Activated CD4-positive, alpha-beta memory T cell treated with anti-CD3 and anti-CD28 coated beads, Interleukin-2, amount 10 ng/mL, durations not matched to agents 7 days and 5 days (primary cell): ENCODE measurements at regions of chr2 and their contacts with region 1.

Region 1: DNA sequence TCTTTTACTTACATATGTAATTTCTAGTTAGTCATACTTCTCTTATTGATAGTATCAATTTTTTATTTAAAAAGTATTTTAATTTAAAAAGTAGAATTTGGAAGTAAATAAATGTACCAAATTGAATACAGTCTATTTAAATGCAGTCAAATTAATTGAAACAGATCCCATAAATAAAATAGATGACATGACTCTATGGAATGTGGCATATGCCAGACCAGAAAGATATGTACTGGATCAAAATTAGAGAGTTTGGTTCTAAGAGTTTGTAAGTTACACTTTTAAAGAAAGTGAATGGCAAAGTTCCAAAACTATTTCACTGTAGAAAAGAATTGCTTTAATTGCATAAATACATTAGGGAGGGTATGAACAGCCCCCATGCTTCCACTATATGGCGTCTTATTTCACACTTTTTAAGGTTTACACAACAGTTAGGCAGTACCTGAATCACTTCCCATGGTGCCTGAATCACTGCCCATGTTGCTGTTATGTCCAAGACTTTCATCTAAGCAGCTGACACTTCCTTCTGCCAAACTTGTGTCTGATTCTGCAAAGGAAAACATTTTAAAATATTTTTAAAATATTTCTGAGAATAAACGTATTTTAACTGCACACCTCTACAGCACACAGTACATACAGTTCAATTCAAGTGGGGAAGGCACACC is 25.2 kb downstream of the IFIH1 start:
- DNase-seq: no peak
- H3K4me3 Mint-ChIP-seq: no peak overlapping the region
- H3K27ac Mint-ChIP-seq: no peak overlapping the region
- H3K4me1 Mint-ChIP-seq: no peaks in the 10 kb centered on the region
- H3K27me3 Mint-ChIP-seq: no peaks in the 10 kb centered on the region

Region 2: GRCh38 chr2:162118559-162119031 is 174.7 kb before region 1 on chr2:
- CTCF ChIA-PET with region 1: no interaction called
- POLR2A ChIA-PET with region 1: no interaction called
- DNase-seq: no peak
- H3K4me3 Mint-ChIP-seq: no peak overlapping the region
- H3K27ac Mint-ChIP-seq: no peak overlapping the region
- H3K4me1 Mint-ChIP-seq: peaks cover 13% of the 10 kb centered on the region
- H3K27me3 Mint-ChIP-seq: no peaks in the 10 kb centered on the region

Region 3: DNA sequence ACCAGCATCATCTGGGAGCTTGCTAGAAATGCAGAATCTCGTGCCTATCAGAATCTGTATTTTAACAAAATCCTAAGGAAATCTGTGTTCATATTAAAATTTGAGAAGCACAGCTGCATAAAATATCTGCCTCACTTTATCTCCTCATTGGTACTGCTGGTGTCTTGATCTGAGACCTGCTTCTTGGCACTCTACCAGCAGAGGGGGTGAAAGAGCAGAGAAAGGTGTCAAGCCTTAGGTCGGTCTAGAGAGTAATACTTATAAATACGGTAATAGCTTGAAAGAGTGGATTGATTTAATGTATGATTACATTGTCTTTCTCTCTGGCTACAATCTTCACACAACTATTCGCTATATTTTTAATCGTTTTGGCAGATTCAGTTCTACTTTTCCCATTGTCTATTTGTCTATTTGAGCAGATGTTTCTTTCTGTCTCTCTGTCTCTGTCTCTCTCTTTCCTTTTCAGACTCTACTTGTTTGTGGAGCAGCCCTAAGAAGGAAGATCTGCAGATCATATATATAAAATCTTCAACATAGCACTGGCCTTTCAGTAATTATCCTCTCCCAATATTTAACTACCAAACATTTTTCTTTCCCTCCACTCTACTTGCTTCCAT is 139.5 kb before region 1 on chr2:
- CTCF ChIA-PET with region 1: interaction called, 15 read pairs
- POLR2A ChIA-PET with region 1: no interaction called
- DNase-seq: peak; percentile 63
- H3K4me3 Mint-ChIP-seq: no peak overlapping the region
- H3K27ac Mint-ChIP-seq: no peak overlapping the region
- H3K4me1 Mint-ChIP-seq: peaks cover 1% of the 10 kb centered on the region
- H3K27me3 Mint-ChIP-seq: peaks cover 33% of the 10 kb centered on the region